ENCODE measurements at regions of chr6 and their contacts with region 1.

Region 1: DNA sequence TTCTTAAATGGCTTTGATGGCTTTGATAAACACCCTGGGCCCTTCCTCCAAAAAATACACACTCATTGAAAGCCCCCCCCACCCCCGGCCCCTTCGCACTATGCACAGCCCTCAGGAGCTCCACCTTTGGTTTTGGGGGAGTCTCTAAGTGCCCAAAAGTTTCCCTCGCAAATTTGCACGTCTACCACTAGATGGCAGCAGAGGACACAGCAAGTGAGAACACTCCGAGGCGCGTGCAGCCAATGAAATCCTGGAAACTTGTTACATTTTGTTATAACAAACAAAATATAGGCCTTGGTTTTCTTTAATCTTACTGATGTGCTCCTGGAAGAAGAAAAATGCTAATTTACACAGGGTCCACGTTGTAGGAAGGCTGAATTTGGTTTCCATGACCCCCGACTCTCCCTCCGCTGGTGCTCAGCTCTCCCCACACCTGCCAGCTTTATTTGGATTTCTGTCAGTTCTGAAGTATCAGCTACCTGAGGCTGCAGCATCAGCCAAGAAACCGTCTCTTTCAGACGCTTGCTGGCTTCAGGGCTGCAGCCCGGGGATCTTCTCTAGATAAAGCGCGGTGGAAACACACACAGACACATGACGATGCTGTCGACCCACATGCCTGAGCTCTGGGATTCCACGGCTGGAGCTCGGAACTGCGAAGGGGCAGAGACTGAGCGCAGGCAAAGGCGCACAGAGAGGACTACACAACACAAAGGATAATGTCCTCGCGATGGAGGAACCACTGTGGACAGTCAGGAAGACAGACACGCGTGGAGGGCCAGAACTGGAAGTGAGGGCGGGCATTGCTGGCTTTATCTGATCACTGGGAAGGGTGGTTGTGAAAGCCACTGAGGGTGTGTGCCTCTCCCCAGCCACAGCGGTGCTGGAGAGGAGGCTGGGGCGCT is 148.4 kb upstream of the RPS6KA2 start:
- DNase-seq: peak; percentile 75
- ATAC-seq: peak; percentile 78
- H3K4me3 Mint-ChIP-seq: no peak overlapping the region
- H3K27ac Mint-ChIP-seq: no peak overlapping the region
- H3K4me1 Mint-ChIP-seq: peaks cover 6% of the 10 kb centered on the region
- H3K27me3 Mint-ChIP-seq: peaks cover 45% of the 10 kb centered on the region

Region 2: DNA sequence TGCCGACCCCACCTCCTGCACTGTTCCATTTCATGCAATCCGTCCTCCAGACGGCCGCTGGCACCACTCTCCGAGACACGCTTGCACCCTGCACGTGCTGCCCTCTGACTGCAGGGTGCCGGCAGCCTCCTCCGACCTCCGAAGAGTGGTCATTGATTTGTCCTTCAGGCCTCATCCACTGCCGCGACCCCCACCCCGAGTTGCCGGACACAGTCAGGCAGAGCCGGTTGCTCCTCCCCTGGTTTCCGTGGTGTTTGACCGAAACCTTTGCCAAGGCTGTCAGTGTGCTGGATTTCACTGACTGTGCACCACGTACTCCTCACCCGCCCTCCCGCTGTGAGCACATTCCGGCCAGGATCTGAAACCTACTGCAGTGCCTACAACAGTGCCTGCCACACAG is 956.0 kb before region 1 on chr6:
- CTCF ChIA-PET with region 1: no interaction called
- DNase-seq: no peak
- ATAC-seq: no peak
- H3K4me3 Mint-ChIP-seq: no peak overlapping the region
- H3K27ac Mint-ChIP-seq: no peak overlapping the region
- H3K4me1 Mint-ChIP-seq: no peaks in the 10 kb centered on the region
- H3K27me3 Mint-ChIP-seq: peaks cover 27% of the 10 kb centered on the region

Region 3: DNA sequence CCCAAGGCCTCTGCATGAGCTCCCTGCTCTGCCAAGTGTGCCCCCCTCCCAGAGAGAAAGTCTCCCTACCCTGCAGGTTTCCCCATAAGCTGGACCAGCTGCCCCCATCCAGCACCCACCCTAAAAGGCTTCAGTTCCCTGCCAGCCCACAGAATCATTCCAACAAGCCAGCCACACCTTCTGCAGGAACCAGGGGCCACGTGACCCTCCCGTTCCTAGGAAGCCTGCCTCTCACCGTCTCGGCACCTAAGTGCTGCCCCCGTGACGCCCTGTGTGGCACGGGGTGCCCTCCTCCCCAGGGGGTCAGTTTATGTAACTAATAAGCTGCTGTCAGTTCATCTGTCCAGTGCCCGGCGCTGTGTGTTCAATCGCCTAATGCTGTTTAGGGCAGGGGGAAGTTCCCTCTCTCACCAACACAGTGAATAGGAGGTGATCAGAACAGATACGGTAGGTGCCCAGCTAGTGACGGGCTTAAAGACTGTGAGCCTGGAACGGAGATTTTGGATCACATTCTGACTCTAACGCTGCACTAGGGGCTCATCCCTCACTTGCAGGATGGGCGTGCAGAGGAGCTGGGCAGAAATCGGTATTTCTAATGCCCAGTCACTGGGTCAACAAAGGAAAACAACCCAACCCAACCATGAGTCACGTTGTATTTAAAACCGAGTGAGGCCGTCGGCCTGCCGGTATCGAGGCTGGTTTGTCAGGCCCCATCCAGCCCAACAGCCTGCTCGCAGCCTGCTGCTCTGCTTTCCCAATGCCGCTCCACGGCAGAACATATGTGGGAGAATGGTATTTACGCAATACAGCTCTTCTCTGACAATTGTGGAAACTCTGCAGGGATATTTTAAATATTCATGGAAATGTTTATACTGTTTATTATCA is 245.0 kb before region 1 on chr6:
- CTCF ChIA-PET with region 1: no interaction called
- DNase-seq: no peak
- ATAC-seq: no peak
- H3K4me3 Mint-ChIP-seq: no peak overlapping the region
- H3K27ac Mint-ChIP-seq: no peak overlapping the region
- H3K4me1 Mint-ChIP-seq: no peaks in the 10 kb centered on the region
- H3K27me3 Mint-ChIP-seq: no peaks in the 10 kb centered on the region

Region 4: GRCh38 chr6:166733900-166734299 is 41.5 kb before region 1 on chr6:
- CTCF ChIA-PET with region 1: no interaction called
- DNase-seq: no peak
- ATAC-seq: no peak
- H3K4me3 Mint-ChIP-seq: no peak overlapping the region
- H3K27ac Mint-ChIP-seq: no peak overlapping the region
- H3K4me1 Mint-ChIP-seq: peaks cover 6% of the 10 kb centered on the region
- H3K27me3 Mint-ChIP-seq: no peaks in the 10 kb centered on the region

Region 5: GRCh38 chr6:166760288-166760687 is 15.1 kb before region 1 on chr6:
- CTCF ChIA-PET with region 1: interaction called, 23 read pairs
- DNase-seq: peak; percentile 66
- ATAC-seq: peak; percentile 53
- H3K4me3 Mint-ChIP-seq: no peak overlapping the region
- H3K27ac Mint-ChIP-seq: no peak overlapping the region
- H3K4me1 Mint-ChIP-seq: peaks cover 17% of the 10 kb centered on the region
- H3K27me3 Mint-ChIP-seq: peaks cover 45% of the 10 kb centered on the region

Region 6: DNA sequence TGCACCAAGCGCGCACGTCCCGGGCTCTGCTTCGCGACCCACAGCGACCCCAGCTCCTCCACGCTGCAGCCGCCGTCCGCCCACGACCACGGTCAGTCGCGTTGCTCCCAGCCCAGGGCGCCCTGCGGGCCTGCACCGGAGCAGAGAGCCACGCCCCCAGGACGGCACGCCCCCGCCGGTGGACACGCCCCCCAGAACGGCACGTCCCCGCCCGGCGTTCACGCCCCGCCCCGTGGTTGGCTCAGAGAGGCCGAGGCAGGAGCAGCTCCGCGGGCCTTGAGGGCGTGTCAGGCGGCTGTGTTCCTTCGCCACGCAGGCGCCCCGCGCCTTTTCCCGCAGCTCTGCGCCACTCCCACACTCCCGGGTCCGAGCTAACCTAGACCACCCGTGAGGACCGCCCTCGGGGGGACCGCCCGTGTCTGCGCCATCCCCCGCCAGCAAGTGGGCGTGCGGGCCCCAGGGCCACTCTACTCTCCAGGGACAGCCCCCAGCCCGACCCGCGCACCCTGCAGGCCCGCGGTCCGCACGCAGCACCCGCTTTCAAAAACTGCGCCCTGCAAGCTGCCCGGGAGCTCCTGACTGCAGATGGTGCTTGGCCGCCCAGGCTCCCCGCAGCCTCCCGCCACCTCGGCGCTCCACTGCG is 181.1 kb after region 1 on chr6 and contains the start of gene RNASET2:
- CTCF ChIA-PET with region 1: interaction called, 15 read pairs
- DNase-seq: peak; percentile 98
- ATAC-seq: peak; percentile 87
- H3K4me3 Mint-ChIP-seq: peak within 1 kb of the TSS; percentile 80
- H3K27ac Mint-ChIP-seq: peak within 1 kb of the TSS; percentile 91
- H3K4me1 Mint-ChIP-seq: peaks cover 55% of the 10 kb centered on the region
- H3K27me3 Mint-ChIP-seq: no peaks in the 10 kb centered on the region
- total RNA-seq, gene RNASET2: 28.8 to 46.6 TPM

Region 7: GRCh38 chr6:166989427-166990032 is 214.1 kb after region 1 on chr6:
- CTCF ChIA-PET with region 1: interaction called, 14 read pairs
- DNase-seq: no peak
- ATAC-seq: no peak
- H3K4me3 Mint-ChIP-seq: no peak overlapping the region
- H3K27ac Mint-ChIP-seq: peak overlapping the region; percentile 26
- H3K4me1 Mint-ChIP-seq: peaks cover 14% of the 10 kb centered on the region
- H3K27me3 Mint-ChIP-seq: no peaks in the 10 kb centered on the region

Region 8: DNA sequence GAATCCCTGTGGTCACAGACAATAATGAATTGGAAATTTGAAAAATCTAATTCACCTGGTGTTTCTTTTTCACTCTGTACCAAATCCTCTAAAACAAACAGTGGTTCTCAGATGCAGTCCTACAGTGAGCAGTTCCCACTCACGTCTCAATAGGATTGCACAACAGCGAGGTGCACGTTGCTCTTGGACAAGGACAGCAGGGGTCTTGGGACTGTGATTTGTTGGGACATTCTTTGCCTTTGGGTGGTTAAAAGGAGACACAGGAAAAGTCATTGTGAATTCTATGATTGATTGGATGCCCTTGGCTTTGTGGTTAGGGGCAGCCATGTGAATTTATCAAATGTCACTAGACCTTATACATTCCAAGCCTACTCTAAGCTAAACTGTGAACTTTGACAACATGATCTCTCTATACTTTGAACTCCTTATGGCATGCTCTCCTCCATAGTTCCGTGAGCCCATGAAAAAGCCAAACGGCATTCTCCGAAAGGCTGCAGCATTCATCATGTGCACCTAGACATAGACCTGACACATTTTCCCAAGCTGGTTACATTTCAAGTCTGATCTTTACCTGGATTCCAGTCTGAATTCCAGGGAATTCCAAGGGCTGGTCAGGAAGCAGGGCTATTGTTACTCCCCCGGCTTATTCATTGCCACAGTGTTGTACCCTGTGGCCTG is 516.3 kb after region 1 on chr6:
- CTCF ChIA-PET with region 1: interaction called, 14 read pairs
- DNase-seq: no peak
- ATAC-seq: no peak
- H3K4me3 Mint-ChIP-seq: no peak overlapping the region
- H3K27ac Mint-ChIP-seq: no peak overlapping the region
- H3K4me1 Mint-ChIP-seq: no peaks in the 10 kb centered on the region
- H3K27me3 Mint-ChIP-seq: peaks cover 13% of the 10 kb centered on the region